Panc1 (cell line): ENCODE measurements at regions of chr15 and their contacts with region 1.

Region 1: DNA sequence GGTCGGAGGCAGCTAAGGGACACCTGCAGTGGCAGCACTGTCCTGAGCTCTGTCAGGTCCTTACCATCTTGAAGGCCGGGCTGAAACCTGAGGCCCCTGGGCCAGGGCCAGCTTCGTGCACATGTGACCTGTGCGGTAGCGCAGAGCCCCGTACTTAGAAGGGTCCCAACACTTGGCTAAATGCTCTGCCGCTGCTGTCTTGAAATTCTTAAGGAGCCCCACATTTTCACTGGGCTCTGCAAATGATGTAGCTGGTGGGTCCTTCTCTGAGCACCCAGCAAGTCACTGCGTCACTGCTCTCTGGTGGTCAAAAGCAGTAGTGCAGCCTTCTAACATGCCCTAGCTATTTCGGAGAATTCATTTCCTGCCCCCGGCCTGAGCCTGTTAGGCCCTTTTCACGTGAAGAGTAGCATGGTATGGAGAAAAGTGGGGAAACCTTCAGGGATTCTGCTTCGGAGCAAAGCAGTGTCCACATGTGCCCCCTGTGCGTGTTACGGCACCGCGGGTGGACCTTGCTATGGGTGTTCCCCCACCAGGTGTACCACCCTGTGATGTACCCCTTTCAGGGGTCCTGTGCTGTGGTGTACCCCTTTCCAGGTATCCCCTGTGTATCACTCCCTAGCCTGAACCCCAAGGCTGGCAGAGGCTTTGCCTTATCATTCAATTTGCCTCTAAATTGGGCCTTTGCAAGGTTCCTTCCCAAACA is 79.7 kb downstream of the TMEM266 start:
- DNase-seq: peak; percentile 61
- ATAC-seq: peak; percentile 93
- H3K4me3 ChIP-seq: no peak overlapping the region
- H3K27ac ChIP-seq: no peak overlapping the region
- H3K4me1 ChIP-seq: no peaks in the 10 kb centered on the region
- H3K27me3 ChIP-seq: no peaks in the 10 kb centered on the region
- CTCF ChIP-seq: peak; percentile 95

Region 2: DNA sequence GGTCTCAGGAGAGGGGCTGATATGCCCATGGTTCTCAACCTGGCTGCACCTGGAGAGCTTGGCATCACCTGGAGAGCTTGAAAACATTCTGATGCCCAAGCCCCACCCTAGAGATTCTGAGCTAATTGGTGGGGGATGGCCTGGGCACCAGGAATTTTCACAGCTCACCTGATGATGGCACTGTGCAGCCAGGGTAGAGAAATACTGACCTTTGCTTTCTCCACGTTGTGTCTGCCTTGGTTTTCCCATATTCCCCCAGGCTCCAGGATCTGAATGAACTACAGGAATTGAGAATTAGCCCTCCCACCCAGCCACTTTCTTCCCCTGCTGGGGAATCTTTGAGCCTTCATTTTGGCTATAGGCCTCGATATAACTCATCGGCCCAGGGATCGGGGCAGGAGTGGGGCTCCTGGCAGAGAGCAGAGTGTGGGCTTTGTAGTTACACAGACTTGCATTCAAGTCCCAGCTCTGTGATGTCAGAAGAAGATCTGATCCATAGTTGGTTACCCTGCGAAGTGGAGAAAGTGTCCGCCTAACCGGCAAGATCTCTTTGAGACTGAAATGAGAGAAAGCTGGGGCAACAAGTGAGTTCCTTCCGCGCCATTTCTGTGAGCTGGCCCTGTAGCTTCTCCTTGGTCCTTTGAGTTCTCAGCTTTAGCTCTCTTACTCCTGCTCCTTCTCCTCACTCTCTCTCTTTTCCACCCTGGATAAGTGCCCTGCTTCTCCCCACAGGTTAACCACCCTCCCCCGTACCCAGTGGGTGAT is 329.4 kb before region 1 on chr15:
- CTCF ChIA-PET with region 1: interaction called, 12 read pairs
- POLR2A ChIA-PET with region 1: no interaction called
- in situ Hi-C with region 1: no loop called
- intact Hi-C with region 1: loop called (anchors 1 kb)
- DNase-seq: peak; percentile 20
- ATAC-seq: peak; percentile 92
- H3K4me3 ChIP-seq: no peak overlapping the region
- H3K27ac ChIP-seq: no peak overlapping the region
- H3K4me1 ChIP-seq: no peaks in the 10 kb centered on the region
- H3K27me3 ChIP-seq: peaks cover 3% of the 10 kb centered on the region; the same call in 1 of the 2 replicates
- CTCF ChIP-seq: peak; percentile 76

Region 3: GRCh38 chr15:75928680-75929608 is 210.6 kb before region 1 on chr15:
- CTCF ChIA-PET with region 1: interaction called, 11 read pairs
- POLR2A ChIA-PET with region 1: no interaction called
- in situ Hi-C with region 1: no loop called
- intact Hi-C with region 1: no loop called
- DNase-seq: no peak
- ATAC-seq: peak; percentile 74
- H3K4me3 ChIP-seq: no peak overlapping the region
- H3K27ac ChIP-seq: no peak overlapping the region
- H3K4me1 ChIP-seq: no peaks in the 10 kb centered on the region
- H3K27me3 ChIP-seq: no peaks in the 10 kb centered on the region
- CTCF ChIP-seq: peak; percentile 74

Region 4: GRCh38 chr15:76024021-76024768 is 115.3 kb before region 1 on chr15:
- CTCF ChIA-PET with region 1: no interaction called
- POLR2A ChIA-PET with region 1: no interaction called
- in situ Hi-C with region 1: no loop called
- intact Hi-C with region 1: no loop called
- DNase-seq: no peak
- ATAC-seq: no peak
- H3K4me3 ChIP-seq: no peak overlapping the region
- H3K27ac ChIP-seq: no peak overlapping the region
- H3K4me1 ChIP-seq: no peaks in the 10 kb centered on the region
- H3K27me3 ChIP-seq: no peaks in the 10 kb centered on the region
- CTCF ChIP-seq: no peak

Region 5: DNA sequence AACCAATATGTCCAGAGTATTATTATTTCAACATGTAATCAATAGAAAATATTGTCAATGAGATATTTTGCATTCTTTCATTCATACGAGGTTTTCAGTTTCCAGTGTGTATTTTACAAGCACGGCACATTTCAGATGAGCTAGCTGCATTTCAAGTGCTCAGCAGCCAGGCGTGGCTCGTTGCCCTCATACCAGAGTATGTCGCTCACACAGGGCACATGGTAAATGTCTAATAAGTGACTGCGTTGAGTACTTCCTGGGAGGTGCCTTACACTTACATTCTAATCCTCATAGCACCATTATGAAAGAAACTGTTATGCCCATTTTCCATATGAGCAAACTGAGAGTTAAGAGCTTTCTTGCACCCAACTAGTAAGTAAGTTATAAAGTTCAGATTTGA is 32.4 kb before region 1 on chr15:
- CTCF ChIA-PET with region 1: interaction called, 14 read pairs
- POLR2A ChIA-PET with region 1: no interaction called
- in situ Hi-C with region 1: no loop called
- intact Hi-C with region 1: no loop called
- DNase-seq: no peak
- ATAC-seq: no peak
- H3K4me3 ChIP-seq: no peak overlapping the region
- H3K27ac ChIP-seq: no peak overlapping the region
- H3K4me1 ChIP-seq: no peaks in the 10 kb centered on the region
- H3K27me3 ChIP-seq: no peaks in the 10 kb centered on the region
- CTCF ChIP-seq: no peak